Activated CD4-positive, alpha-beta T cell treated with anti-CD3 and anti-CD28 coated beads for 36 hours (primary cell): ENCODE measurements at regions of chr14 and their contacts with region 1.

Region 1: GRCh38 chr14:104752735-104753531 is at the start of gene SIVA1:
- DNase-seq: peak; percentile 100
- ATAC-seq: peak; percentile 92
- H3K4me3 Mint-ChIP-seq: peak within 1 kb of the TSS; percentile 84
- H3K27ac Mint-ChIP-seq: peak within 1 kb of the TSS; percentile 83
- H3K4me1 Mint-ChIP-seq: peaks cover 33% of the 10 kb centered on the region
- H3K27me3 Mint-ChIP-seq: no peaks in the 10 kb centered on the region
- total RNA-seq, gene SIVA1: 47.1 to 97.1 TPM

Region 2: DNA sequence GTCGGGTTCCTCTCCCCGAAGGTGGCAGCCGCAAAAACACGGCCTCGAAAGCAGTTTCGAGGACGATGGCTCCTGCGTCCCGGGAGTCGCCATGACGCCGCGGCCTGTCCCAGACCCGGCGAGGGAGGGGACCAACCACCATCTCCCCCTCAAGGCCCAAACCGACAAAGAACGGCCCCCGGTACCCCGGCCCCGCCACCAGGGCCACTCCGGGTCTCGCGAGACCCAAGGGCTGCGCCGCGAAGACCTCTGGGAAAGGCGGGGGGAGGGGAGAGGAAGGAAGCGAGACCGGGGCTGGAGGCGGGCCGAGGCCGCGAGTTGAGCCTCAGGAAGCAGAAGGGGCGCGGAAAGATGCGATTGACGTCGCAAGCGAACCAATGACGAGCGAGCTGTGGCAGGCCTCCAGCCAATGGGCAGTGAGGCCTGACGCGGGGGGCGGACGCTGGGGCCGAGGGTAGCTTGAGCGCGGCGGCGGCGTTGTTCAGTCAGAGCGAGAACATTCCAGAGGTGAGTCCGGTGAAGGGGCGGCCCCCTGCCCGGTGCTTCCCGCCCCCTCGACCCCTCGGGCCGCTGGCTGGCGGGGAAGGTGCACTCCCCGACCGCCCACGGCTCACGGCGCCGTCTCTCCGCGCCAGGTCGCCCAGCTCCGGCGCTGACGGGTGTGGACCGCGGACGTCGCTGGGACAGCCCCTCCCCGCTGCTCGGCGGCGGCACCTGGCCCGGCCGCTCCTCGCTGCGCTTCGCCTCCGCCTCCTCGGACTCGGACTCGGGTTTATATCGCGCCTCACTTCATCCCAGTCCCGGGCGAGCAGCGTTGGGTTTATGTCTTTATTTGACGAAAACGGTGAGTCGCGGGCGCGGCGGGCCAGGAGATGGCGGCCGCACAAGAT is 1418.9 kb before region 1 on chr14 and contains the start of gene EIF5:
- CTCF ChIA-PET with region 1: no interaction called
- POLR2A ChIA-PET with region 1: no interaction called
- intact Hi-C with region 1: loop called in 1 of 2 experiments (anchors 2 kb)
- DNase-seq: peak; percentile 99
- ATAC-seq: peak; percentile 91
- H3K4me3 Mint-ChIP-seq: peak within 1 kb of the TSS; percentile 79
- H3K27ac Mint-ChIP-seq: peak within 1 kb of the TSS; percentile 92
- H3K4me1 Mint-ChIP-seq: peaks cover 53% of the 10 kb centered on the region
- H3K27me3 Mint-ChIP-seq: no peaks in the 10 kb centered on the region
- total RNA-seq, gene EIF5: 222 to 234 TPM

Region 3: GRCh38 chr14:104689109-104689880 is 63.6 kb before region 1 on chr14 and contains the start of gene INF2:
- CTCF ChIA-PET with region 1: interaction called, 3 read pairs
- POLR2A ChIA-PET with region 1: no interaction called
- intact Hi-C with region 1: loop called in 1 of 2 experiments (anchors 1 kb)
- DNase-seq: peak; percentile 73
- ATAC-seq: peak; percentile 69
- H3K4me3 Mint-ChIP-seq: peak within 1 kb of the TSS; percentile 72
- H3K27ac Mint-ChIP-seq: peak within 1 kb of the TSS; percentile 60
- H3K4me1 Mint-ChIP-seq: peaks cover 34% of the 10 kb centered on the region
- H3K27me3 Mint-ChIP-seq: no peaks in the 10 kb centered on the region
- total RNA-seq, gene INF2: 60.8 to 66.0 TPM

Region 4: GRCh38 chr14:104826189-104826860 is 73.4 kb after region 1 on chr14:
- CTCF ChIA-PET with region 1: interaction called, 6 read pairs
- POLR2A ChIA-PET with region 1: interaction called, 4 read pairs
- intact Hi-C with region 1: loop called (anchors 1 kb)
- DNase-seq: peak; percentile 97
- ATAC-seq: peak; percentile 93
- H3K4me3 Mint-ChIP-seq: peak overlapping the region; percentile 73
- H3K27ac Mint-ChIP-seq: no peak overlapping the region
- H3K4me1 Mint-ChIP-seq: peaks cover 13% of the 10 kb centered on the region
- H3K27me3 Mint-ChIP-seq: peaks cover 13% of the 10 kb centered on the region

Region 5: DNA sequence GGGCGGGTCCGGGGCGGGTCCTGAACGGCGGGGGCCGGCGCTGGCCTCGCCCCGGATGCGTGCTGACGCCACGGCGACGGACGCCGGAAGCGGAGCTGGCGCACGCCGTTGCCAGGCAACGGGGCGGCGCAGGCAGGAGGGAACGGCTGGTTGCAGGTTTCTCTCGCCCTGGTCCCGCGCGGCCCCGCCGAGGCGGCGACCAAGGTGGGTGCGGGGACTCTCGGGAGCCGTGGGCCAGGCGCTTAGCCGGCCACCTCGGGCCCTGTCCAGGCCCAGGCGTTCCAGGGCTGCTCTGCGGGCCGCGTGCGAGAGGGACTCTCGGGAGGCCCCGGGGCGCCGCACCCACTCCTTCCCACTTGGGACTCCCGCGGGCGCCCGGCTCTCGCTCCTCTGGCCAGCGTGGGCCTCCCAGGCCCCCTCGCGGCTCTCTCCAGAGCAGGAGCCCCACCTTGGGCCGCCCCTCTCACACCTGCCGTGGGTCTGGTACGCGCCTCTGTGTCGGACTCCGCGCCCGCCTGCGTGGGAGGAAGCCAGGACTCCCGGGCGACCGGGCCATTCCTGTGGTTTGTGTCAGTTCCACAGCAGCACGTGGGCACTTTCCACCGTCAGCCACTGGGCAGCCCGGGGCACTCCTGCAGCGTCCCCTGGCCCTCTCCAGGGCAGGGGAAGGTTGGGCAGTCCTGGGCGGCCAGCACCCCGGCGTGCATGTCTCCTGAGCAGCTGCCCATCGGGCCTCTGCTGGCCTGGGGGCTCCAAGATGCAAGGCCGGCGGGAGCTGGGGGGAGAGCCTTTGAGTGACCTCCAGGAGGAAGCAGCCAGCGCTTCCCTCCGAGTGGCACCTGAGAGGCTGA is 233.0 kb after region 1 on chr14 and contains the start of gene CLBA1:
- CTCF ChIA-PET with region 1: interaction called, 3 read pairs
- POLR2A ChIA-PET with region 1: no interaction called
- intact Hi-C with region 1: loop called in 1 of 2 experiments (anchors 1 kb)
- DNase-seq: peak; percentile 93
- ATAC-seq: peak; percentile 99
- H3K4me3 Mint-ChIP-seq: peak within 1 kb of the TSS; percentile 64
- H3K27ac Mint-ChIP-seq: peak within 1 kb of the TSS; percentile 47
- H3K4me1 Mint-ChIP-seq: peaks cover 5% of the 10 kb centered on the region
- H3K27me3 Mint-ChIP-seq: no peaks in the 10 kb centered on the region
- total RNA-seq, gene CLBA1: 1.1 to 1.9 TPM

Region 6: DNA sequence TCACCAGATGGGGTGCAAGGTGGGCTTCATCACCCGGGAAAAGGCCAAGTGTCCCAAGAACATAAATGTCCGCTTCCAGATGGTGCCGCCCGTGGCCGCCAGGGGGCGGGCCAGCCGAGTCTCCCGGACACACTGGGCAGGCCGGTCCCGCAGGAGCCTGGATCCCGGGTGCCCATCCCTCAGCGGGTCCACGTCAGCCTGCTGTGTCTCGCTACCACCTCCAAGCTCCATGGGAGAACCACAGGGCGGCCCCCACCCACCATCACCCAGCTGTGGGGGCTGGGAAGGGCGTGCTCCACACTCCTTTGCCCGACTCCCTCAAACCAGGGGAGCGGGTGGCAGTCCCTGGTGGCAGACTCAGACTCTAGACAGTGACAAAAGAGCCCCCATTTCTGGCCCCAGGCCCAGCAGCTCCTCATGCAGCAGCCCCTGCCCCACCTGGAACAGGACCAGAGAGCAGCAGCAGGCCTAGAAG is 450.2 kb after region 1 on chr14:
- CTCF ChIA-PET with region 1: no interaction called
- POLR2A ChIA-PET with region 1: no interaction called
- intact Hi-C with region 1: no loop called
- DNase-seq: peak; percentile 78
- ATAC-seq: peak; percentile 52
- H3K4me3 Mint-ChIP-seq: no peak overlapping the region
- H3K27ac Mint-ChIP-seq: no peak overlapping the region
- H3K4me1 Mint-ChIP-seq: peaks cover 7% of the 10 kb centered on the region
- H3K27me3 Mint-ChIP-seq: peaks cover 14% of the 10 kb centered on the region

Region 7: DNA sequence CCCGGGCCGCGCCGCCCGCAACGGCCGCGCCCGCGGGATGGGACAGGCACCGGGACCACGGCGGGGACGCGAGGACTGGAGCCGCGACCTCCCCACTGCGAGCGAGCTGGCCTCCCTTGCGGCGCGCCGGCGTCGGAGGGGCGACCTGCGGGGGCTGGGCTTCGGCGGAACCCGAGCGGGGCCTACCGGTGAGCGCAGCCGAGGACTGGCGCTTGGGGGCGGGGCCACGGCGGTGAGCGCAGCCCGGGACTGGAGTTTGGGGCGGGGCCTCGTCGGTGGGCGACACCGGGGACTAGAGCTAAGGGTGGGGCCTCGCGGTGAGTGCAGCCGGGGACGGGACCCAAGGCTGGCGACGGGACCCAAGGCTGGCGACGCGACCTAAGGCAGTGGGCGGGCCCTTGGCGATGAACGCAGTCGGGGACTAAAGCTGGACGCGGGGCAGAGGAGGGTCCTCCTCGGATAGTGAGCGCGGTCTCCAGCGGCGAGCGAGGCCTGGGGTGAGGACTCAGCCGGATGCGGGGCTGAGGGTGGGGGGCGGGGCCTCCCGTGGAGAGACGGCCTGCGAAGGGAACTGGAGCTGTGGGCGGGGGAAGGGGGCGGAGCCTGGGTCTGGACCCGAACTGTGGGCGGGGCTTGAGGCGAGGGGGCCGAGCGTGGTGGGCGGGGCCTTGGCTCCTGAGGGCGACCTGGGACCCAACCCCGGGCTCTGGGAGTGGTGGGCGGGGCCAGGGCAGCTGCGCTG is 548.0 kb after region 1 on chr14 and contains the start of gene BRF1:
- CTCF ChIA-PET with region 1: no interaction called
- POLR2A ChIA-PET with region 1: interaction called, 4 read pairs
- intact Hi-C with region 1: loop called in 1 of 2 experiments (anchors 1 kb)
- DNase-seq: peak; percentile 100
- ATAC-seq: peak; percentile 92
- H3K4me3 Mint-ChIP-seq: peak within 1 kb of the TSS; percentile 86
- H3K27ac Mint-ChIP-seq: peak within 1 kb of the TSS; percentile 86
- H3K4me1 Mint-ChIP-seq: peaks cover 39% of the 10 kb centered on the region
- H3K27me3 Mint-ChIP-seq: no peaks in the 10 kb centered on the region
- total RNA-seq, gene BRF1: 20.0 to 28.1 TPM